Astrocyte of the cerebellum (primary cell): ENCODE measurements at regions of chr12 and their contacts with region 1.

Region 1: DNA sequence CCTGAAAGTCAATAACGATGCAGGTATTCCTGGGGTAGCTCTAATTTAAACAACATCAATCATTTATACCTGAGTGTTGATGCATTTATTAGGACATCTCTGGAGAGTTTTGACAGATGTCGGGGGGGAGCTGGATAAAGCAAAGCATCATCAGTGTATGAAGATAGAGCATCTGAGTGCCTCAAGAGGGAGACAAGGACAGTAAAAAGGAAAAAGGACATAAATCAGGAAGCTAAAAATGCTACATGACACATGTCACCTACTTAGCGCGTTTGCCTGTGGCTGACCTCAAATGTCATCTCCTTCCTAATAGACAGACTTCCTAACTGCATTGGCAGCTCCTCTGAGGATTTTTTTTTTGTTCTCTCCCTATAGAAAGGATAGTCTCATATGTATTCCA is 259.5 kb upstream of the PKP2 start:
- DNase-seq: no peak
- H3K4me3 ChIP-seq: no peak overlapping the region
- CTCF ChIP-seq: no peak

Region 2: GRCh38 chr12:33205981-33206380 is 49.9 kb after region 1 on chr12:
- in situ Hi-C with region 1: loop called (anchors 5 kb)
- DNase-seq: no peak
- H3K4me3 ChIP-seq: no peak overlapping the region
- CTCF ChIP-seq: no peak